RWPE1 (cell line): ENCODE measurements at regions of chr1 and their contacts with region 1.

Region 1: GRCh38 chr1:203652724-203653461 is 26.3 kb downstream of the ATP2B4 start:
- DNase-seq: no peak
- H3K27ac ChIP-seq: no peak overlapping the region
- CTCF ChIP-seq: no peak

Region 2: DNA sequence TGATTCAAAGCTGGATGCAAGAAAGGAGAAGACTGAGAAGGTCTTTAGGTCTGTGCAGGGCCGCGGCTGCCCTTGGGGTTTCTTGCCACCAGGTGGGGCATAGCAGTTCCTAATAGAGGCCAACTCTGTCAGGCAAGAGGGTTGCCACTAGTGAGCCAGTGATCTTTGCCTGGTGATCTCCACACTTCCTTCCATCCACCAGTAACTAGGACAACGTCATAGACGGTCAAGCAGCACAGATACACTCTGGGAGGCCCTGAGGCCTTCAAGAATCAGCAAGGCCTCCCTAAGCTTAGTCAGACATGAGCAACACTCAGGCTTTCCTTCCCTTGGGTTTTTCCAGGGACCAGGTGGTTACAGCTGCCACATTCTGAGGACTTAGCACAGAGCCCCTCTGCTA is 59.2 kb before region 1 on chr1:
- CTCF ChIA-PET with region 1: no interaction called
- POLR2A ChIA-PET with region 1: no interaction called
- DNase-seq: no peak
- H3K27ac ChIP-seq: no peak overlapping the region
- CTCF ChIP-seq: no peak

Region 3: DNA sequence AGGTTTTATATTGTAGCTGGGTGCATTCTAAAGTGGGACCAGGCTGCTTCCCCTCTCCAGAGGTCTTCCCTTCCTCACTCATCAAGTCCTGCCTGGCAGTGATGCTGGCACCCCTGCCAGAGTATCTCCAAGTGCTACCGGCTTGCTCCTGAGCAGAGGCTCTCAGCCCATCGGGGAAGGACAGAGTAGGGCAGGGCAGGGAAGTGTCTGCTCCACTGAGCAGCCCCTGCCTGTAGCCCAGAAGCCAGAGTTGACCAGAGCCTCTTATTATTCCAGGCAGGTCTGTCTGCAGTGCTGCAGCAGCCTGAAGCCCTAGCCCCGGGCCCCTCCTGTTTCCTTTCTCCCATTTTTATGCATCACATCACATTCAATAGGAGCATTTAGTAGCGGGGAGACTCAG is 24.9 kb after region 1 on chr1:
- CTCF ChIA-PET with region 1: no interaction called
- POLR2A ChIA-PET with region 1: interaction called, 11 read pairs
- DNase-seq: no peak
- H3K27ac ChIP-seq: peak overlapping the region; percentile 9; the same call in 1 of the 2 replicates
- CTCF ChIP-seq: no peak

Region 4: DNA sequence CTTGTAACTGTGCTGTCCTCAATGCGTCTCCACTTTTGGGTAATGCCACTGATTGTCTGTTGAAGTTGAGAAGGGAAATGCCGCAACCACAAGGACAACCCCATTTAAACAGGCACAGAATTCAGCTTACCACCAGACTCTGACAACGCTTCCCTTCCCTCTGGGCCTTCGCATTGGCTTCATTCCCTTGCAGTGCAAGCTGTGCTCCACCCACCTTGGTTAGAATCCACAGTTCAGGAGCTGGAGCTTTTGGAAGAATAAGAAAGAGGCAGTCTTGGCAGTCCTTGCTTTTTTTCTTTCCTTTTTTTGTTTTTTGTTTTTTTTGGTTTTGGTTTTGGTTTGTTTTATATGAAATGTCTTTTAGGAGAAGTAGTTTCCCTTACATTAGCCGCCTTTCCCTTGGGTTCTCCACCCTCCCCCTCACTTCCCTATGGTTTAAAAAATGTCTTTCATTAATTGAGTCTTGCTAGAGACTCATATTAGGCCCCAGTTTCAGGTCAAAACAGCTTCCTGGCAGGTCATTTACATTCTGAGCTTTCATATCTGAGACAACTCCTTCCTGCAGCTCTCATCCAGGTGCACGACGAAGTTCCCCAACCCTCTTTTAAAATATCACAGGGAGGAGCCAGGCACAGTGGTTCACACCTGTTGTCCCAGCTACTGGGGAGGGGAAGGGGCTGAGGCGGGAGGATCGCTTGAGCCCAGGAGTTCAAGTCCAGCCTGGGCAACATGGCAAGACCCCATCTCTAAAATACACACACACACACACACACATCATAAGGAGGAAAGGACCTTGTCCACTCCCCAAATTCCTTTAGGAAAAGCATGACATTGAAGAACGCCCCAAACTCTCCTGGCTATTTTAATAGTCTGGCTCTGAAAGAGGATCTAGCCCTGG is 91.4 kb after region 1 on chr1:
- CTCF ChIA-PET with region 1: no interaction called
- POLR2A ChIA-PET with region 1: no interaction called
- DNase-seq: no peak
- H3K27ac ChIP-seq: peak overlapping the region; percentile 42
- CTCF ChIP-seq: no peak

Region 5: GRCh38 chr1:204241050-204241449 is 588.2 kb after region 1 on chr1:
- CTCF ChIA-PET with region 1: no interaction called
- POLR2A ChIA-PET with region 1: no interaction called
- DNase-seq: peak; percentile 45
- H3K27ac ChIP-seq: no peak overlapping the region
- CTCF ChIP-seq: no peak